ENCODE measurements at regions of chr16 and their contacts with region 1.

Region 1: GRCh38 chr16:20799599-20799998 is 6.7 kb downstream of the ERI2 start:
- DNase-seq: peak in 1 of 2 donors; percentile 4
- ATAC-seq: peak in 1 of 3 donors; percentile 44
- H3K4me3 ChIP-seq: no peak overlapping the region
- H3K4me3 Mint-ChIP-seq: no peak overlapping the region
- H3K27ac ChIP-seq: no peak overlapping the region
- H3K27ac Mint-ChIP-seq: no peak overlapping the region
- H3K4me1 ChIP-seq: no peaks in the 10 kb centered on the region
- H3K4me1 Mint-ChIP-seq: no peaks in the 10 kb centered on the region
- H3K27me3 ChIP-seq: no peaks in the 10 kb centered on the region
- H3K27me3 Mint-ChIP-seq: no peaks in the 10 kb centered on the region
- CTCF ChIP-seq: peak; percentile 74

Region 2: DNA sequence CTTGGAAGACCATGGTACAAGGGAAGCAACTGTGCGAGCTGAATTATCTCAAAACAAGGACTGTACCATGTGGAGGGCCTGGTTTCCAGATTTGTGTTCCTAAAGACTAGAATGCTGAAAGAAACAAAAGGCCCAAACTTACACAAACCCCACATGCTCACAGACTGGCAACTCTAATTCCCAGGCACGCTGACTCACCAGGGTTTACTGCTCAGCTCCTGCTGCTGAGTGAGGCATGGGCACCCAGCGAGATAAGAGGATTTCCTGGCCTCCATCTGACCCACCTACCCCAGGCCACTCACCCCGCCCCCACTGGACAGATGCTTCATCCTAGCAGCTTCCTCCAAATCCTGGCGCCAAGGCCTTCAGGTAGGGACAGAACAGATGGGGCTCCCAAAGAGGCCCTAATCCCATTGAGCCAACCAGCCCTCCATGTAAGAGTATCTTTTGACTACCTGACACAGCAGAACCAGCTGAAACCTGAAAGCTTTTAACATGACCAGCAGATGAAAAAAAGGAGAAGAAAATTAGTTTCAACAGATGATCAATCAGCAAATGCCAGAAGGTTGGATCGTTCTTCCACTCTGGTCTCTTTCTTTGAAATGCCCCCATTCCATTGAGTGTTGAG is 66.7 kb after region 1 on chr16:
- intact Hi-C with region 1: no loop called
- DNase-seq: no peak
- ATAC-seq: no peak
- H3K4me3 ChIP-seq: no peak overlapping the region
- H3K4me3 Mint-ChIP-seq: no peak overlapping the region
- H3K27ac ChIP-seq: no peak overlapping the region
- H3K27ac Mint-ChIP-seq: peak overlapping the region in 1 of 2 donors; percentile 69
- H3K4me1 ChIP-seq: no peaks in the 10 kb centered on the region
- H3K4me1 Mint-ChIP-seq: peaks cover 32 to 64% of the 10 kb centered on the region in 2 donors
- H3K27me3 ChIP-seq: no peaks in the 10 kb centered on the region
- H3K27me3 Mint-ChIP-seq: no peaks in the 10 kb centered on the region
- CTCF ChIP-seq: no peak

Region 3: GRCh38 chr16:21083729-21084268 is 284.2 kb after region 1 on chr16:
- intact Hi-C with region 1: loop called (anchors 1 kb)
- DNase-seq: peak; percentile 24 to 63
- ATAC-seq: peak; percentile 55 to 83 (median 64)
- H3K4me3 ChIP-seq: no peak overlapping the region
- H3K4me3 Mint-ChIP-seq: no peak overlapping the region
- H3K27ac ChIP-seq: no peak overlapping the region
- H3K27ac Mint-ChIP-seq: no peak overlapping the region
- H3K4me1 ChIP-seq: no peaks in the 10 kb centered on the region
- H3K4me1 Mint-ChIP-seq: no peaks in the 10 kb centered on the region
- H3K27me3 ChIP-seq: peaks cover 2% of the 10 kb centered on the region
- H3K27me3 Mint-ChIP-seq: peaks cover 6 to 14% of the 10 kb centered on the region in 2 donors
- CTCF ChIP-seq: peak; percentile 53